Activated naive CD4-positive, alpha-beta T cell treated with anti-CD3 and anti-CD28 coated beads for 36 hours (primary cell): ENCODE measurements at regions of chr22 and their contacts with region 1.

Region 1: DNA sequence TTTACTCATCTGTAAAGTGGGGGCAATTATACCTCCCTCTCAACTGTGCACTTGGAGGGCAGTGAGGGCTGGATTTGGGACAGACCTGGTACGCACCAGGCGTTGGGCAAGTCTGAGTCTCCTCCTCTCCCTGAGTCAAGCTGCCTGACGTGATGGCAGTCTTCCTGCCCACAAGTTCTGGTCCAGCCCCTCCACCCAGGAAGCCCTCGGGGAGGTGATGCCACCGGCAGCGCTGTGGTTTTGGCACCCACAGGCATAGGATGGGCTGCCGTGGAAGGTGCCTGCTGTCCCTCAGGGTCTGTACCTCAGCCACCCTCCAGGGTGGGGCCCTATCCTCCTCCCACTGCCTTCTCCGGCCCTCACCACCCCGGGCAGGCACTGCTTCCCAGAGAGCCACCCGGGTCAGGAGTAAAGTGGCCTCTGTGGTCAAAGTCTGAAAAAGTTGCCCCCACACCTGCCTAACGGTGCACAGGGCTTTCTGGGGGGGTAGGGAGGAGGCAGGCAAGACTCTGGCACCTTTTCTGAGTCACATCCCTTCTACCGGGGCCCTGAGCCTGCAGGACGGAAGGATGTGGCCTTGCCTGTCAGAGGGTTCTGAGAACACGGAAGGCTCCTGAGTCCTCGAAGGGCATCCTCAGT is 6.5 kb upstream of the APOBEC3H start:
- DNase-seq: peak; percentile 94
- H3K4me3 Mint-ChIP-seq: peak overlapping the region; percentile 54
- H3K27ac Mint-ChIP-seq: peak overlapping the region; percentile 91
- H3K4me1 Mint-ChIP-seq: peaks cover 72% of the 10 kb centered on the region
- H3K27me3 Mint-ChIP-seq: no peaks in the 10 kb centered on the region

Region 2: GRCh38 chr22:38181453-38182247 is 908.9 kb before region 1 on chr22 and contains the start of gene PLA2G6:
- CTCF ChIA-PET with region 1: no interaction called
- intact Hi-C with region 1: loop called (anchors 5 kb)
- DNase-seq: peak; percentile 99
- H3K4me3 Mint-ChIP-seq: peak within 1 kb of the TSS; percentile 94
- H3K27ac Mint-ChIP-seq: peak within 1 kb of the TSS; percentile 96
- H3K4me1 Mint-ChIP-seq: peaks cover 43% of the 10 kb centered on the region
- H3K27me3 Mint-ChIP-seq: no peaks in the 10 kb centered on the region
- total RNA-seq, gene PLA2G6: 80.2 to 85.3 TPM

Region 3: GRCh38 chr22:38949889-38950405 is 140.6 kb before region 1 on chr22:
- CTCF ChIA-PET with region 1: no interaction called
- intact Hi-C with region 1: no loop called
- DNase-seq: no peak
- H3K4me3 Mint-ChIP-seq: no peak overlapping the region
- H3K27ac Mint-ChIP-seq: no peak overlapping the region
- H3K4me1 Mint-ChIP-seq: peaks cover 35% of the 10 kb centered on the region
- H3K27me3 Mint-ChIP-seq: peaks cover 14% of the 10 kb centered on the region

Region 4: DNA sequence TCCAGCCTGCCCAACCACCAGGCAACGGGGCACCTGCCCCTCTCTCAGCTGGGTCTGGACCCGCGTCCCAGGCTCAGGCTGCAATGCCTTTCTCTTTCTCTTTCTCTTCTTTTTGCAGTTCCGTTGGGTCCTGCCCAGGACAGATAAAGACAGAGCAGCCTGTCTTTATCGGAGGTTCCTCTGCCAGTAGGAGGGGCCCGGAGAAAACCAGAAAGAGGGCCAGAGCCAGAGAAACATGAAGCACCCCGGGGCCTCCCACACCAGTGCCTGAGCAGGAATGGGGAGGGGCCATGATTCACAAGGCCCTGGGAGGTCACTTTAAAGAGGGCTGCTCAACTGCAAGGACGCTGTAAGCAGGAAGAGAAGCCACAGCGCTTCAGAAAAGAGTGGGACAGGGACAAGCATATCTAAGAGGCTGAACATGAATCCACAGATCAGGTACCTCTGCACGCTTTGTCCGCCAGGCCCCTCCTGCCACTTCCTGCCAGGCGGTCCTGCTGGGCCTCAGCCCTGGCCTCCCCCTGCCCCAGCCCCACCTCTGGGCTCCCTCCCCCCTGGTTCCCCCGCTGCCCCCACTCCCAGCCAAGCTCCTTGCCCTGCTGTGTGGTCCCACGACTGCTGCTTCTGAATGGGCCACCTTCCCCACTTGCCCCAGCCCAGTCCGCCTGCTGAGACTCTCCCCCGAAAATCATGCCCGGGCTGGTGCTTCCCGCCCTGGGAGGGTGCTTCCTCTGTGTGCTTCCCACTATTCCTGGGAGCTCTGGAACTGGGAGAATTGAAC is 76.4 kb before region 1 on chr22 and contains the start of gene APOBEC3C:
- CTCF ChIA-PET with region 1: interaction called, 4 read pairs
- intact Hi-C with region 1: loop called (anchors 1 kb)
- DNase-seq: peak; percentile 93
- H3K4me3 Mint-ChIP-seq: peak within 1 kb of the TSS; percentile 89
- H3K27ac Mint-ChIP-seq: peak within 1 kb of the TSS; percentile 95
- H3K4me1 Mint-ChIP-seq: peaks cover 34% of the 10 kb centered on the region
- H3K27me3 Mint-ChIP-seq: no peaks in the 10 kb centered on the region
- total RNA-seq, gene APOBEC3C: 71.5 to 74.1 TPM

Region 5: GRCh38 chr22:39080052-39080762 is 10.3 kb before region 1 on chr22:
- CTCF ChIA-PET with region 1: no interaction called
- intact Hi-C with region 1: loop called (anchors 1 kb)
- DNase-seq: no peak
- H3K4me3 Mint-ChIP-seq: no peak overlapping the region
- H3K27ac Mint-ChIP-seq: no peak overlapping the region
- H3K4me1 Mint-ChIP-seq: peaks cover 29% of the 10 kb centered on the region
- H3K27me3 Mint-ChIP-seq: no peaks in the 10 kb centered on the region

Region 6: DNA sequence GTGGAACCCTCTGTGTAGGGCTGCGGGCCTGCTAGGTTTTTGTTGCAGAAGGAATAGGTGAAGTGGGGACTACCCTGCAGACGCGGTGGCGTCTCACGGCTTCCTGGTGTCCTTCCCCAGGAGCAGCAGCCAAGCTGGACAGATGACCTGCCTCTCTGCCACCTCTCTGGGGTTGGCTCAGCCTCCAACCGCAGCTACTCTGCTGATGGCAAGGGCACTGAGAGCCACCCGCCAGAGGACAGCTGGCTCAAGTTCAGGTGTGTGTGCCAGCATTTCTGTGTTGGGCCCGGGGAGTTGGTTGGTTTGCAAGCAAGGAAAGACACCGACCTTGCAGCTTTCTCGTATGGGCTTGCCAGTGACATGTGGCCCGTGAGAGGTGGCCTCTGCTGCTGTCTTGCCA is 324.3 kb after region 1 on chr22:
- CTCF ChIA-PET with region 1: no interaction called
- intact Hi-C with region 1: loop called (anchors 5 kb)
- DNase-seq: no peak
- H3K4me3 Mint-ChIP-seq: no peak overlapping the region
- H3K27ac Mint-ChIP-seq: no peak overlapping the region
- H3K4me1 Mint-ChIP-seq: peaks cover 64% of the 10 kb centered on the region
- H3K27me3 Mint-ChIP-seq: no peaks in the 10 kb centered on the region